Cardiac septum (tissue), 1 donor: ENCODE measurements at regions of chr6 and their contacts with region 1.

Region 1: DNA sequence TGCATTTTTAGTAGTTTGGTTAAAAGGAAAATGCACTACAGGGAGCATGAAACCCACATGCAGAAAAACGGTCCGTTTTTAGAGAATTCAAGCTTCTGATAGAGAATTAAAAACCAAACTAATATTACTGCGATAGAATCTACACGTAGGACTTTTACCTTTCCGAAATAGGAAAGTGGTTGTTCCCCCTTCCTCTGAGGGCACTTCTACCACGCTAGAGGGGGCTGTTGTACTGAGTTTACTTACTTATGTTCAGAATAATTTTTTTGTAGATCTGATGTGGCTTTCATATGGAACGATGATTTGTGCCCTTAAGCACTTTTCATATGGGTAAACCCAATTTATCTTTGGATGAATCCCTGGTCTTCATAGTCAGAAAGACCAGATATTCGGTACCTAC is 264.3 kb upstream of the PLN start:
- DNase-seq: no peak

Region 2: DNA sequence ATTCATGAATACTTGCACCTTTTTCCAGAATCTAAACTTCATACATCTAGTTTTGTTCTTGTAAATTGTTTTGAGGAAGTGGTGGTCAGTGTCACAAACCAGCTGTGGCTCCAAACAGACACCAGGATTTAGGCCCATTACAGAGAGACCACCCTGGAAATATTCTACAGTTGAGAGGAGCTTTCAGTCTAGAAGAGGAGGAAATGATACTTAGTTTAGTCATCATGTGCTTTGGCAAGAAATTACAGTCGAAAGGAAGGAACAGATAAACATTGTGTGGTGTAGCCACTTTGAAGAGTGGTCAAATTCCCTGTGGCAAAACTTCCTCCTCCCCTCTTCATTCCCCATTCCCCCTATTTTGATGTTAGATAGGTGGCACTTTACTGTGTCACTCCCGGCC is 785.6 kb before region 1 on chr6:
- intact Hi-C with region 1: no loop called
- DNase-seq: no peak

Region 3: GRCh38 chr6:117976030-117976651 is 307.6 kb before region 1 on chr6:
- intact Hi-C with region 1: loop called (anchors 5 kb)
- DNase-seq: no peak

Region 4: GRCh38 chr6:118464620-118465019 is 180.9 kb after region 1 on chr6:
- intact Hi-C with region 1: loop called (anchors 5 kb)
- DNase-seq: no peak

Region 5: GRCh38 chr6:118548136-118548535 is 264.4 kb after region 1 on chr6 and contains the start of gene PLN:
- intact Hi-C with region 1: loop called (anchors 5 kb)
- DNase-seq: no peak
- total RNA-seq, gene PLN: 2,070 TPM

Region 6: DNA sequence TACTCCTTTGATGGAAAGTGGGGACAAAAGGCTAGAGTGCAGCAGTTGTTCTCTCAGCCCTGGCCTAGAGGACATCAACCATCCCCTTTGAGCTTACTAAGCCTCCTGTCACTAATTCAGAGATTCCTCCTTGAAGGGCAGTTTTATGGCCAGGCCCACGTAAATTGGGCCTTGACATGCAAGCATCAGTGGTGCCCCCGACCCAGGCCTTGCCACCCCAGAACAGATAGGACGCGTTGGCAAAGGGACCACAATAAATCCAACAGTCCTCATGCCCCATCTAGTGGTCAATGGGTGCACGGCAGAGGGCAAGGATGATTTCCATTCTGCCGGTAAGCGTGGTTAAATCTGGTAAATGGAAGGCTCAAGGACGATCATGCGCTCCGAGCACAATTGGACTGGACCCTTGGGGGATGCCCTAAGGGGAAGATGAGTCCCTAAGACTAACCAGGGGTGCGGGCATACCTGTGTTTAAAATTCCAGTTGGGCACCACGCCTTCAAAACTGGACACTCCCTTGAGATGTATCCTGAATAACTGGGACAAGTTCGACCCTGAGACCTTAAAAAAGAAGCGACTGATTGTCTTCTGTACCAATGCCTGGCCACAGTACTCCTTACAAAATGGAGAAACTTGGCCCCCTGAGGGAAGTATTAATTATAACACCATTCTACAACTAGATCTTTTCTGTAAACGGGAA is 335.1 kb after region 1 on chr6:
- intact Hi-C with region 1: loop called (anchors 2 kb)
- DNase-seq: peak; percentile 82